ENCODE measurements at regions of chr6 and their contacts with region 1.

Region 1: GRCh38 chr6:117399924-117400323 is 25.8 kb downstream of the ROS1 start:
- DNase-seq: no peak
- ATAC-seq: peak; percentile 87
- H3K4me3 ChIP-seq: no peak overlapping the region
- H3K27ac ChIP-seq: no peak overlapping the region
- H3K4me1 ChIP-seq: no peaks in the 10 kb centered on the region
- H3K27me3 ChIP-seq: no peaks in the 10 kb centered on the region
- CTCF ChIP-seq: peak; percentile 23 to 44 (median 38); a peak in 4 of 6 replicates
- POLR2A ChIP-seq: no peak
- RAD21 ChIP-seq: no peak; the same call in 1 of the 2 replicates

Region 2: DNA sequence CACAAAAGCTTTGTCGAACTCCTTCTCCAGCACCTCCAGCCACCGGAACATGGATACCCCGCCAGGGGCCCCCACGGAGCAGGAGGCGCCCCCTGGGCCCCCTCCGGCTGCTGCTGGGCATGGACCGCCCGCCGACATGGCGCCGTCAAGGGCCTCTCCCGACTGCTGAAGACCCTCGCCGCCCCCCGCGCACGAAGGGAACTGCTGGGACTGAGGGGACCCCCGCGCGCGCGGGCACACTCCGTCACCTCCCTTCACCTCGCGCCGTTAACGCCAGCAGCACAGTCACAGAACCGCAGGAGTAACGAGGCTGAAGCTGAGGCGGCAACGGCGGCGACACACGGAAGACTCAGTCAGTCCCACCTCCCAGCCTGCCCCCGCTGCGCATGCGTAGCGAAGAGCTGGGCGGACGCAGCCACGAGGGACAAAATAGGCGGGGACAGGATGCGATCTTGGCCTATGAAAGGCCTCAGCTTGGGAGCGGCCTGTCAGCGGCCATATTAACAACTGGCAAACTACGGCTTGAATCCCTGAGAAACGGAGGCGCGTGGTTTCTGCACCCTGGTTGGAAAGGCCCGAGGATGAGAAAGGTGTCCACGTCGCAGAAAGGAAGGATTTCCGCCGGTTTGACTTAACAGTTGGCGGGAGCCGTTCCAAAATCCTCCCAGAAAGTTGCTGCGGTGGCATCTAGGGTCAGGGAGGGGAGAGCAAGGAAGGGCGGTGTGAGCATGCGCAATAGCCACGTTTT is 202.4 kb after region 1 on chr6 and contains the start of gene GOPC:
- CTCF ChIA-PET with region 1: interaction called, 3 read pairs
- POLR2A ChIA-PET with region 1: no interaction called
- RAD21 ChIA-PET with region 1: no interaction called
- intact Hi-C with region 1: loop called (anchors 2 kb)
- DNase-seq: peak; percentile 95
- ATAC-seq: peak; percentile 90
- H3K4me3 ChIP-seq: peak within 1 kb of the TSS; percentile 88 to 89
- H3K27ac ChIP-seq: peak within 1 kb of the TSS; percentile 86
- H3K4me1 ChIP-seq: peaks cover 9 to 18% of the 10 kb centered on the region in 2 experiments
- H3K27me3 ChIP-seq: no peaks in the 10 kb centered on the region
- CTCF ChIP-seq: 0 out of 6 replicates have a peak, but pooled peaks of 1 of the 3 experiments have one; percentile 12
- POLR2A ChIP-seq: peak; percentile 77
- RAD21 ChIP-seq: no peak
- total RNA-seq, gene GOPC: 24.2 TPM

Region 3: DNA sequence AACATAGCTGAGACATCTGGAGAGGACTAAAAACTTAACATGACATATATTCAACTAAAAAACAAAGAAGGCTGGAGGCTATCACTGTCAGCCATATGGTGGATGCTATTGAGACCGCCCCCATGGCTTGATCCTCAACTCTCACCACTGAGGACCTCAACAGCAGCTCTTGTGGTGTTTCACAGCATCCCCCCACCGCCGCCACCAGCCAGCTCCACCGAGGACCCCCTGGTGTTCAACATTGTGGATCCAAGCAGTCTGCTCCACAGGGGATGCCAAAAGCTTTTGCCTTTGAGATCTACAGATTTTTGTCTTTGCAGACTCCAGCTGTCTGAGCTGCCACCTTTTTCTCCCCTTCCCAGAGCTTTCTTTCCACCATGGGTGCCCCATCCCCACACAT is 339.9 kb after region 1 on chr6:
- CTCF ChIA-PET with region 1: no interaction called
- POLR2A ChIA-PET with region 1: no interaction called
- RAD21 ChIA-PET with region 1: no interaction called
- intact Hi-C with region 1: no loop called
- DNase-seq: no peak
- ATAC-seq: no peak
- H3K4me3 ChIP-seq: no peak overlapping the region
- H3K27ac ChIP-seq: no peak overlapping the region
- H3K4me1 ChIP-seq: no peaks in the 10 kb centered on the region
- H3K27me3 ChIP-seq: no peaks in the 10 kb centered on the region
- CTCF ChIP-seq: no peak
- POLR2A ChIP-seq: no peak
- RAD21 ChIP-seq: no peak

Measured in HCT116 (cell line).